Activated CD4-positive, alpha-beta T cell treated with anti-CD3 and anti-CD28 coated beads for 36 hours (primary cell): ENCODE measurements at regions of chr12 and their contacts with region 1.

Region 1: GRCh38 chr12:92136965-92137721 is 8.5 kb downstream of the BTG1 start:
- DNase-seq: no peak
- ATAC-seq: peak; percentile 47
- H3K4me3 Mint-ChIP-seq: peak overlapping the region; percentile 99
- H3K27ac Mint-ChIP-seq: peak overlapping the region; percentile 94
- H3K4me1 Mint-ChIP-seq: peaks cover 67% of the 10 kb centered on the region
- H3K27me3 Mint-ChIP-seq: no peaks in the 10 kb centered on the region

Region 2: DNA sequence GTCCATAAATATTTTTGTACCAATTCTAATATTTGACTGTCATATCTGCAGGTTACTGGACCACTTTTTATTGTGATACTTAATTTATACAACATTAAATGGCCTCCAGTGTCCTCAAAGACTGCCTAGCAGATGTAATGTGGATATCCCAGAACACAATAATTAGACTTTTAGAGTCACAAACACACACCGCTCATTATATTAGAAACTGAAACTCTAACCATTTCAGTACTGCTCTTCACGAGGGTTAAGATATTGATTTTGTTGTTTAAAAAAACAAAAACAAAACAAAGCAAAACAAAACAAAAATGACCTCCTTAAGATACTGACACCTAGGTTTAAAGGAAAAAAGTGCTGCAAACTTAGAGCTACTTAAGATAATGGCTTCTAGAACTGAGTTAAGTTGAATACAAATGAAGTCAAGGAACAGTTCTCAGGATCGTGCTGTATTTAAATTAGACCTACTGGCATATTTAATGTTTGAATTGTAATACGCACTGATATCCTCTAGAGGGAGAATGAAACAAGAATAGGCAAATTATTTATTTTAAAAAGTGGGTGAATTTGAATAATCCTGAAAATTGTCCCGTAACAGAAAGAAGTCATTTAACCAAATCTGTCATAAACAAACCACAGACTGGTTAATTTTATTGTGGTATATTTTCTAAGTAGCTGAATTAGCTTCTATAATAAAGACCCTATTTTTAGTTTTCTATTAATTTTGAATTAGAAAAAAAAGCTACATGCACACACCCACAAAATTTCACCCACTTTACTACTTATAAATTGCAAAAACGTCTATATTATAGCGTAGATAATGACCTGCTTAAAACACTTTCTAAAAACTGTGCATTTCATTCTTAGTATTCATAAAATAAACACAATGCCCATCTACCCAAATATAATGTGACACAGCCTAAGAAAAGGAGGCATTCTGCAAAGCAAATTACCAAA is 559.3 kb before region 1 on chr12:
- CTCF ChIA-PET with region 1: no interaction called
- POLR2A ChIA-PET with region 1: no interaction called
- intact Hi-C with region 1: loop called (anchors 5 kb)
- DNase-seq: no peak
- ATAC-seq: peak; percentile 47
- H3K4me3 Mint-ChIP-seq: peak overlapping the region; percentile 35
- H3K27ac Mint-ChIP-seq: peak overlapping the region; percentile 32
- H3K4me1 Mint-ChIP-seq: peaks cover 8% of the 10 kb centered on the region
- H3K27me3 Mint-ChIP-seq: no peaks in the 10 kb centered on the region

Region 3: GRCh38 chr12:91991399-91992187 is 145.6 kb before region 1 on chr12:
- CTCF ChIA-PET with region 1: no interaction called
- POLR2A ChIA-PET with region 1: no interaction called
- intact Hi-C with region 1: loop called (anchors 2 to 5 kb)
- DNase-seq: no peak
- ATAC-seq: peak; percentile 66
- H3K4me3 Mint-ChIP-seq: no peak overlapping the region
- H3K27ac Mint-ChIP-seq: no peak overlapping the region
- H3K4me1 Mint-ChIP-seq: peaks cover 54% of the 10 kb centered on the region
- H3K27me3 Mint-ChIP-seq: no peaks in the 10 kb centered on the region

Region 4: GRCh38 chr12:92065018-92065499 is 72.1 kb before region 1 on chr12:
- CTCF ChIA-PET with region 1: interaction called, 4 read pairs
- POLR2A ChIA-PET with region 1: interaction called, 3 read pairs
- intact Hi-C with region 1: loop called (anchors 1 to 2 kb)
- DNase-seq: peak; percentile 71
- ATAC-seq: peak; percentile 76
- H3K4me3 Mint-ChIP-seq: peak overlapping the region; percentile 30
- H3K27ac Mint-ChIP-seq: peak overlapping the region; percentile 89
- H3K4me1 Mint-ChIP-seq: peaks cover 57% of the 10 kb centered on the region
- H3K27me3 Mint-ChIP-seq: no peaks in the 10 kb centered on the region

Region 5: DNA sequence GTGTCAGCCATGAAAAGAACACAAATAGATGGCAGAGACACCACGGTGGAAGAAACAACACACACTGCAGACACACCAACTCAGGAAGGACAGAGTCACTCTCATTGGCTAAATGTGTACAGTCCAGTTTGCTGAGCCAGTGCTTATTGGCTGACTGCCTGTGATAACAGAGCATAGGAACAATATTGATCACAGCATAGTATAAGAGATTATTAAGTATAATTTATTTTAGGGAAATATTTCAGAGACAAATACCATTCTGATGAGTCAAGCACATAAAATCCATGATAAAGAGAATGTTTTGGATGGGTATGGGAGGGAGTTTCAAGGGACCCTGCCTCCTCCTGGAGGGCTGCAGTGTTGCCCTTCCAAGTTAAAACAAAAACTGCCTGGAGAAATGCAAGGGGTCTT is 42.4 kb before region 1 on chr12:
- CTCF ChIA-PET with region 1: interaction called, 4 read pairs
- POLR2A ChIA-PET with region 1: no interaction called
- intact Hi-C with region 1: loop called in 1 of 2 experiments (anchors 5 kb)
- DNase-seq: no peak
- ATAC-seq: no peak
- H3K4me3 Mint-ChIP-seq: no peak overlapping the region
- H3K27ac Mint-ChIP-seq: no peak overlapping the region
- H3K4me1 Mint-ChIP-seq: peaks cover 31% of the 10 kb centered on the region
- H3K27me3 Mint-ChIP-seq: no peaks in the 10 kb centered on the region

Region 6: DNA sequence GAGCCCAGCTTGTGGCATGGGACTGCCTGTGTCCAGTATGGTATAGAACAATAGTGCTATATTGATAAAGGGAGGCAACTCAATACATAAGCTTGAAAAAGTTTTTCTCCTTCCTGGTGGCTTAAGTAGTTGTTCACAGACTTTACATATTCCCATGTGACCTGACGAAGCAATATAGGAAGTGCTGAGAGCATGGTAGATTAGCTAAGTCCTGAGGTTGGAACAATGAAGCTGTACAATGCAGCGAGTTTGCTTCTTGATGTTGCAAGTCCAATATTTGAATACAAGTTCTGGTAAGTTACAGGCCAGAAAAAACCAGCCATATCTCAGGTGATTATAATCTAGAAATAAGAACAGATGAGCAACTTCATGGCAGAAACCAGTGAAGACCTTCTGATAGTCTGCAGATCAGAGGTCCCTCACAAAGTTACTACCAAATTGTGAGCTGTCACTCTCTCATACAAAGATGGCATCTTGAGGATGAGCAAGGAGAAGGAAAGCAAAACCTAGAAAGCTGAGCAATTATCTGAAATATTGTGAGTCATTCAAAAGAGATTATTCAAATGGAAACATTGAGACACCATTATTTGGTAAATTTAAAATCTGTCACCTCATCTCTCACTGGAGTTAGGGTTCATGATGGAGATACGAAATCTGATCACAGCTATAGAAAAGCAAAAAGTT is 81.4 kb after region 1 on chr12:
- CTCF ChIA-PET with region 1: no interaction called
- POLR2A ChIA-PET with region 1: no interaction called
- intact Hi-C with region 1: no loop called
- DNase-seq: no peak
- ATAC-seq: peak; percentile 96
- H3K4me3 Mint-ChIP-seq: peak overlapping the region; percentile 20
- H3K27ac Mint-ChIP-seq: peak overlapping the region; percentile 84
- H3K4me1 Mint-ChIP-seq: peaks cover 24% of the 10 kb centered on the region
- H3K27me3 Mint-ChIP-seq: no peaks in the 10 kb centered on the region